ENCODE measurements at regions of chr7 and their contacts with region 1.

Region 1: GRCh38 chr7:44466300-44467216 is 23.9 kb downstream of the NUDCD3 start:
- DNase-seq: no peak
- ATAC-seq: no peak
- H3K4me3 ChIP-seq: no peak overlapping the region
- H3K27ac ChIP-seq: no peak overlapping the region
- H3K4me1 ChIP-seq: peaks cover 41% of the 10 kb centered on the region
- H3K27me3 ChIP-seq: no peaks in the 10 kb centered on the region
- CTCF ChIP-seq: no peak

Region 2: DNA sequence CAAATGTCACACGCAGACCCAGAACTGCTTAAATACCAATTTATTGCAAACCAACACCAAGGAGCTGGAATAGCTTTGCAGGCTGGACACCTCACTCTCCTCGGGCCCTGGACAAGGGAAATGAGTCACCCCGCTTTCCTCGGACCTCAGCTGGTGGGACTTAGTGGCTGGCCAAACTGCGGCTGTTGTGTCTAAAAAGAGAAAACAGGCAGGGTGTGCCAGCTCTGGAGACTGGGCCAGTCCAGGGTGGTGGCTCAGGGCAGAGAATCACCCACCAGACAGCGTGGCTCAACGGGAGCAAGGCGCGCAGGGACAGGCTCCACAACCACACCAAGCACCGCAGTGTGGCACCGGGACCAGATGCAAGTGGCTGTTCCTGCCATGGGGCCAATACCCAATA is 83.0 kb before region 1 on chr7:
- intact Hi-C with region 1: loop called in 1 of 2 experiments (anchors 5 kb)
- DNase-seq: peak; percentile 65 to 79
- ATAC-seq: peak; percentile 80 to 89 (median 85)
- H3K4me3 ChIP-seq: no peak overlapping the region
- H3K27ac ChIP-seq: peak overlapping the region; percentile 55
- H3K4me1 ChIP-seq: peaks cover 29% of the 10 kb centered on the region
- H3K27me3 ChIP-seq: no peaks in the 10 kb centered on the region
- CTCF ChIP-seq: no peak

Measured in psoas muscle (tissue), 8 donors.